K562 (cell line): ENCODE measurements at regions of chr9 and their contacts with region 1.

Region 1: GRCh38 chr9:36166101-36166927 is 2.9 kb upstream of the CCIN start:
- DNase-seq: peak; percentile 81 to 91 (median 88)
- ATAC-seq: peak; percentile 95
- H3K4me3 ChIP-seq: peak overlapping the region; percentile 22
- H3K27ac ChIP-seq: no peak overlapping the region
- H3K4me1 ChIP-seq: peaks cover 5 to 22% of the 10 kb centered on the region in 2 experiments; a peak in 4 of 5 replicates
- H3K27me3 ChIP-seq: peaks cover 0 to 13% of the 10 kb centered on the region in 2 experiments; a peak in 2 of 5 replicates
- CTCF ChIP-seq: peak; percentile 76 to 91 (median 80)
- EP300 ChIP-seq: no peak
- POLR2A ChIP-seq: no peak
- RAD21 ChIP-seq: peak; percentile 59 to 76

Region 2: GRCh38 chr9:35954942-35955546 is 211.3 kb before region 1 on chr9:
- CTCF ChIA-PET with region 1: no interaction called
- POLR2A ChIA-PET with region 1: no interaction called
- in situ Hi-C with region 1: no loop called
- intact Hi-C with region 1: loop called (anchors 5 kb)
- DNase-seq: peak; percentile 30 to 65 (median 39)
- ATAC-seq: peak; percentile 80
- H3K4me3 ChIP-seq: no peak overlapping the region
- H3K27ac ChIP-seq: no peak overlapping the region
- H3K4me1 ChIP-seq: no peaks in the 10 kb centered on the region
- H3K27me3 ChIP-seq: peaks cover 0 to 13% of the 10 kb centered on the region in 2 experiments; a peak in 2 of 5 replicates
- CTCF ChIP-seq: peak; percentile 66 to 79 (median 77)
- EP300 ChIP-seq: no peak
- POLR2A ChIP-seq: no peak
- RAD21 ChIP-seq: peak; percentile 68 to 80

Region 3: GRCh38 chr9:36023260-36024048 is 142.9 kb before region 1 on chr9:
- CTCF ChIA-PET with region 1: no interaction called
- POLR2A ChIA-PET with region 1: no interaction called
- in situ Hi-C with region 1: no loop called
- intact Hi-C with region 1: loop called (anchors 5 kb)
- DNase-seq: peak; percentile 34 to 69 (median 46)
- ATAC-seq: peak; percentile 80
- H3K4me3 ChIP-seq: no peak overlapping the region
- H3K27ac ChIP-seq: no peak overlapping the region
- H3K4me1 ChIP-seq: no peaks in the 10 kb centered on the region; a peak in 1 of 5 replicates
- H3K27me3 ChIP-seq: peaks cover 0 to 3% of the 10 kb centered on the region in 2 experiments; a peak in 1 of 5 replicates
- CTCF ChIP-seq: peak; percentile 72 to 84 (median 80)
- EP300 ChIP-seq: no peak
- POLR2A ChIP-seq: no peak
- RAD21 ChIP-seq: peak; percentile 73 to 81

Region 4: DNA sequence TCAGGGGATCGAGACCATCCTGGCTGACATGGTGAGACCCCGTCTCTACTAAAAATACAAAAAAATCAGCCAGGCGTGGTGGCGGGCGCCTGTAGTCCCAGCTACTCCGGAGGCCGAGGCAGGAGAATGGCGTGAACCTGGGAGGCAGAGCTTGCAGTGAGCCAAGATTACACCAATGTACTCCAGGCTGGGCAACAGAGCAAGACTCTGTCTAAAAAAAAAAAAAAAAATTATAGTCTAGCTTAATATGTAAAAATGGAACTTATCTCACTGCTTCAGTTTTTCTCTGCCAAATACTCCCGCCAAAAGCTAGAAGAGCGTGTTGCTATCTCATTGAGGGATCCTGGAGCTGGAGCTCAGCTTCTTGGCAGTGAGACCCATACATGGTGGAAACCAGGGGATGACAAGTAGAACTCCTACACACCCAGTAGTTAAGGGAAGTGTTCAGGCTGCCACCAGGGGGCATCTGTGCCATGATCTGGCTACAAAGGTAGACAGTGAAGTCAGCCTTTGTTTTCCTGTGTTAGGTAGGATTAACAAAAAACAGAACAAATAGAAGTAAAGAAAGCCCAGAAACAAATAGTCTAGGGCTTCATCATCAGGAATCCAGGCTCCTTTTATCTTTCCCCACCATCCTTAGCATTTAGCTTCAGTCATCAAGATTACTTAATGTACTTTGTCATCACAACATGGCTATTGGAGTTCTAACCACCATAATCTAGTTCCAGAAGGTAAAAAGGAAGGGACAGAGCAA is 63.4 kb before region 1 on chr9:
- CTCF ChIA-PET with region 1: interaction called, 13 read pairs
- POLR2A ChIA-PET with region 1: no interaction called
- in situ Hi-C with region 1: loop called (anchors 5 kb)
- intact Hi-C with region 1: loop called (anchors 1 kb)
- DNase-seq: peak; percentile 56 to 78 (median 59)
- ATAC-seq: peak; percentile 99
- H3K4me3 ChIP-seq: no peak overlapping the region
- H3K27ac ChIP-seq: no peak overlapping the region
- H3K4me1 ChIP-seq: no peaks in the 10 kb centered on the region; a peak in 1 of 5 replicates
- H3K27me3 ChIP-seq: no peaks in the 10 kb centered on the region
- CTCF ChIP-seq: peak; percentile 69 to 75 (median 74)
- EP300 ChIP-seq: no peak
- POLR2A ChIP-seq: no peak
- RAD21 ChIP-seq: peak; percentile 45 to 81

Region 5: GRCh38 chr9:36470643-36471290 is 304.5 kb after region 1 on chr9:
- CTCF ChIA-PET with region 1: no interaction called
- POLR2A ChIA-PET with region 1: no interaction called
- in situ Hi-C with region 1: no loop called
- intact Hi-C with region 1: no loop called
- DNase-seq: peak in 1 of 4 experiments; percentile 5
- ATAC-seq: 0 out of 3 replicates have a peak, but pooled peaks have one; percentile 47
- H3K4me3 ChIP-seq: no peak overlapping the region
- H3K27ac ChIP-seq: no peak overlapping the region
- H3K4me1 ChIP-seq: no peaks in the 10 kb centered on the region; a peak in 1 of 5 replicates
- H3K27me3 ChIP-seq: no peaks in the 10 kb centered on the region
- CTCF ChIP-seq: no peak
- EP300 ChIP-seq: no peak
- POLR2A ChIP-seq: no peak
- RAD21 ChIP-seq: no peak